ENCODE measurements at regions of chr12 and their contacts with region 1.

Region 1: GRCh38 chr12:21501379-21501956 is at the starts of genes GOLT1B and RECQL:
- DNase-seq: peak; percentile 95
- H3K4me3 ChIP-seq: peak within 1 kb of the TSS; percentile 84 to 98 (median 92)
- H3K27ac ChIP-seq: peak within 1 kb of the TSS; percentile 87 to 92 (median 89)
- H3K4me1 ChIP-seq: peaks cover 14 to 34% (median 25%) of the 10 kb centered on the region in 4 donors
- H3K27me3 ChIP-seq: no peaks in the 10 kb centered on the region
- CTCF ChIP-seq: no peak
- EP300 ChIP-seq: no peak
- POLR2A ChIP-seq: peak; percentile 67
- total RNA-seq, gene GOLT1B: 8.6 to 14.6 (median 13.1) TPM
- total RNA-seq, gene RECQL: 2.2 to 32.0 (median 13.5) TPM

Region 2: GRCh38 chr12:21683115-21683514 is 181.6 kb after region 1 on chr12:
- in situ Hi-C with region 1: no loop called
- intact Hi-C with region 1: loop called (anchors 10 kb)
- DNase-seq: no peak
- H3K4me3 ChIP-seq: no peak overlapping the region
- H3K27ac ChIP-seq: no peak overlapping the region
- H3K4me1 ChIP-seq: peaks cover 0 to 6% (median 0%) of the 10 kb centered on the region in 4 donors
- H3K27me3 ChIP-seq: no peaks in the 10 kb centered on the region
- CTCF ChIP-seq: no peak
- EP300 ChIP-seq: no peak
- POLR2A ChIP-seq: no peak

Region 3: GRCh38 chr12:22046090-22046967 is 544.9 kb after region 1 on chr12 and contains the start of gene CMAS:
- in situ Hi-C with region 1: loop called in 1 of 4 experiments (anchors 10 kb)
- intact Hi-C with region 1: no loop called
- DNase-seq: peak; percentile 89
- H3K4me3 ChIP-seq: peak within 1 kb of the TSS; percentile 93 to 99 (median 98)
- H3K27ac ChIP-seq: peak within 1 kb of the TSS; percentile 94 to 99 (median 97)
- H3K4me1 ChIP-seq: peaks cover 4 to 74% (median 50%) of the 10 kb centered on the region in 4 donors
- H3K27me3 ChIP-seq: no peaks in the 10 kb centered on the region
- CTCF ChIP-seq: peak in 1 of 5 experiments; percentile 14
- EP300 ChIP-seq: no peak
- POLR2A ChIP-seq: peak; percentile 90
- total RNA-seq, gene CMAS: 12.3 to 92.6 (median 69.0) TPM

Region 4: DNA sequence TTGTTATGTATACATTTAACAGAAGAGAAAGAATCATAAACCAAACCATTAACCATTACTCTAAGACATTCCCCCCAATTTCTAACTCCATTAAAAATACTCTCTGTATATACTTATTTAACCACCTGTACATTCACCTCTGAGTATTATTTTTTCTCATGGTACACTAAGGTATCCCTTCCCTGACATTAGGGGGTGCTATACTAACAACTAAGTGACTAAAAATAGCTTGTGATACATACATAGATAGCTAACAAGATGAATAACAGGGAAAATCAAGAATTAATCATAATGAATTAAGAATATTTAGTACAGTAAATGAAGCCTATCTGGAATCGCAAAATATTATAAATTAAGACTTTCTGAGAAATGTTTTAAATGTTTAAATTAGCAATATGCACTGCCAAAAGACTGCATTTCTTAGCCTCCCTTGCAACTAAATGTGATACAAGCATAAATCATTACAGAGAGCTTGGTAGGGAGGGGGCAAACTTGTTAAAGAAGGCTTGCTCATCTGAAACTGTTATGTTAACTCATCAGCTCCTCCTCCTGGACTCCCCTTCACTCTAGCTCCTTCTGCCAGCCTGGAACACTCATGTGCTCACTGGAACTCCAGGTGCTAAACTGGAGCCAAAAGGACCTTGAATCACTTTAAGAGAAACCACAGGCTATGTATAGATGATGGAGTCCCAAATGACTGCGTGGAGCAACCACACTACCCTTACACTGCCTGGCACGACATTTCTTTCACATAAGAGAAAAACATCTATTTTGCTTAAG is 1028.0 kb after region 1 on chr12:
- in situ Hi-C with region 1: no loop called
- intact Hi-C with region 1: loop called (anchors 5 kb)
- DNase-seq: no peak
- H3K4me3 ChIP-seq: no peak overlapping the region
- H3K27ac ChIP-seq: no peak overlapping the region
- H3K4me1 ChIP-seq: no peaks in the 10 kb centered on the region
- H3K27me3 ChIP-seq: no peaks in the 10 kb centered on the region
- CTCF ChIP-seq: peak; percentile 43 to 53 (median 47)
- EP300 ChIP-seq: no peak
- POLR2A ChIP-seq: no peak

Measured in transverse colon (tissue), 4 donors.